Dorsolateral prefrontal cortex (tissue), 120 donors: ENCODE measurements at regions of chr1 and their contacts with region 1.

Region 1: GRCh38 chr1:64268653-64269557 is 65.5 kb downstream of the UBE2U start:
- DNase-seq: peak in 6 of 10 donors; percentile 54 to 79 (median 60)
- H3K4me3 ChIP-seq: peak overlapping the region in 39 of 59 donors; percentile 1 to 55 (median 38)
- H3K27ac ChIP-seq: peak overlapping the region in 2 of 59 donors; percentile 6 to 34
- H3K27me3 ChIP-seq: no peaks in the 10 kb centered on the region
- CTCF ChIP-seq: peak; percentile 69 to 96 (median 88)

Region 2: GRCh38 chr1:63902844-63903589 is 365.9 kb before region 1 on chr1:
- intact Hi-C with region 1: no loop called
- DNase-seq: no peak
- H3K4me3 ChIP-seq: no peak overlapping the region
- H3K27ac ChIP-seq: no peak overlapping the region
- H3K27me3 ChIP-seq: no peaks in the 10 kb centered on the region
- CTCF ChIP-seq: no peak

Region 3: DNA sequence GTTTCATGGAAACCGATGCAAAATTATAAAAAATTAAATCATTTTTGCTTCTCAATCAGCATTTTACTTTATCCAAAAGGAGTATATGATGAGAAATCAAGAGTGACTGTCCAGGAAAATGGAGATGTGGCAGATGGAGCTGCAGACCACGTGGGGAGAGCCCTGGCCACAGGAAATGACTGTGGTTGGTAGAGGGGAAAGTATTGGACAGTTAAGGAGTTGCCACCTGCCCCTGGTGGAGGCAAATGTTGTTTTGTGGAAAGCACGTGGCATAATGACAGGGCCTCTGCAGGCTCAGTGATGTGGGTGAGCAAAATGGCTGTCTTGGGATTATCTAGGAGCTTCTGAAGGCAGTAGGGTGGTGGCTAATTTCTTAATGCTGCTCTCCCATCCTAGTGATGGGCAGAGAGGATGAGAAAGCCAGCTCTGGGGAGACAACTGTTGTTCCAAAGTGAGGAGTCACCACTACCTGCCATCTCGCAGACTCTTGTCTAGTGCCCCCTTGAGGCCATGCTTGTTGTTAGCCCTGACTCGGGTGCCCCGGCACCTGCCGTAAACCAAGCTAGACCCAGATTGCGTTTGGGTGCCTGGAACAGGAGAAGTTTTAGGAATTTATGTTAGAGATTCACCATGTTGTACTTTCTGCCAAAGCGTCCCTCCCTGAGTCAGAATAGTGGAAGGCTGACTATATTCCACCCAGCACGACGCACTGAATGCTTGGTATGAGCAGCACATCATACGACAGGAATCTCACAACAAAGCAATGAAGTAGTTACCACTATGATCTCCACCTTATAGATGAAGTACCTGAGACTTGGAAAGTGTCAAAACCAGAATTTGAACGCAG is 351.1 kb before region 1 on chr1:
- intact Hi-C with region 1: no loop called
- DNase-seq: peak in 1 of 10 donors; percentile 51
- H3K4me3 ChIP-seq: no peak overlapping the region
- H3K27ac ChIP-seq: peak overlapping the region in 1 of 59 donors; percentile 68
- H3K27me3 ChIP-seq: no peaks in the 10 kb centered on the region
- CTCF ChIP-seq: peak in 2 of 56 donors; percentile 12 to 13

Region 4: DNA sequence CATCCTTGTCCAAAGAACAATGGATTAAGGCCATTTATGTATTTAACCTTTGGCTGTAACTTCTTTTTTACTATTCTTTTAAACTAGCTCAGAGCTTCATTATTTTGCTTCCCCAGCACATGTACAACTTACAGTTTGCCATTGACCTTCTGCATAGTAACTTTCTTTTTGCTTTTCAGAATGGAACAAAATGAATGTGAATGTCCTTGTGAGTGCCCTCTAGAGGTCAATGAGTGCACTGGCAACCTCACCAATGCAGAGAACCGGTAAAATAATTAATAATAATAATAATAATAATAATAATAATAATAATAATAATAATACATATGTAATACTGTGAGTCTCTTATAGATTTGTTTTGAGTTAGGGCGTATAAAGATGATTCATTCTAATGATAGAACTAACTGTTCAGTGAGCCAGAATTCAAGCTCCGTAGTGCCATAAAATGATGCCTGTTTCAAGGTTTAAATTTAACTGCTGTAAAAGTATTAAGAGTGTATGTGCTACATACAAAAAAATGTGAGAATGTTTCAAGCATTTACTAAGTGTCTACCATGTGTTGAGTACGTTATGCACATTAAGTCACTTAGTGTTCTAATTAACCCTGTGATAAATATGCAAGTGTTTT is 406.9 kb after region 1 on chr1:
- intact Hi-C with region 1: loop called (anchors 5 to 10 kb)
- DNase-seq: no peak
- H3K4me3 ChIP-seq: no peak overlapping the region
- H3K27ac ChIP-seq: no peak overlapping the region
- H3K27me3 ChIP-seq: no peaks in the 10 kb centered on the region
- CTCF ChIP-seq: peak in 55 of 56 donors; percentile 27 to 78 (median 63)

Region 5: DNA sequence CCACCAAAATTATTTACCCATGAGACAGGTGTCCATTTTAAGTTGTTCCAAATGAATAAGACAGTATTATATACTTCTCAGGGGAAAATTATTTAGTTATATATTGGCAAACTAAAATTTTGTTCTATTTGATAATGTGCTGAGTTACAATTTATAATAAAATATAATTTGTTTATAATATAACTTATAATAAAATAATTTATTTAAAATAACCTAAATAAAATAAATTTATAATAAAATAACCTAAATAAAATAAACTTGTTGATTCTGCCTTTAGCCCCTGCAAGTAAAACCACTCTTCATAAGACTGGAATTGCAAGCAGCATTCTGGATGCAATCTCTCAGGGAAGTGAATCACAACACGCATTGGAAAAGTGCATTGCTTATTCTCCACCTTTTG is 545.5 kb after region 1 on chr1:
- intact Hi-C with region 1: no loop called
- DNase-seq: no peak
- H3K4me3 ChIP-seq: no peak overlapping the region
- H3K27ac ChIP-seq: no peak overlapping the region
- H3K27me3 ChIP-seq: no peaks in the 10 kb centered on the region
- CTCF ChIP-seq: no peak